GM12878 (cell line): ENCODE measurements at regions of chr9 and their contacts with region 1.

Region 1: GRCh38 chr9:131762356-131762932 is 22.6 kb upstream of the RAPGEF1 start:
- DNase-seq: no peak
- ATAC-seq: peak; percentile 98
- H3K4me3 ChIP-seq: no peak overlapping the region
- H3K27ac ChIP-seq: no peak overlapping the region
- H3K4me1 ChIP-seq: no peaks in the 10 kb centered on the region
- H3K27me3 ChIP-seq: no peaks in the 10 kb centered on the region; a peak in 1 of 4 replicates
- CTCF ChIP-seq: peak; percentile 63 to 88 (median 87)
- EP300 ChIP-seq: no peak
- POLR2A ChIP-seq: no peak
- RAD21 ChIP-seq: peak; percentile 74

Region 2: DNA sequence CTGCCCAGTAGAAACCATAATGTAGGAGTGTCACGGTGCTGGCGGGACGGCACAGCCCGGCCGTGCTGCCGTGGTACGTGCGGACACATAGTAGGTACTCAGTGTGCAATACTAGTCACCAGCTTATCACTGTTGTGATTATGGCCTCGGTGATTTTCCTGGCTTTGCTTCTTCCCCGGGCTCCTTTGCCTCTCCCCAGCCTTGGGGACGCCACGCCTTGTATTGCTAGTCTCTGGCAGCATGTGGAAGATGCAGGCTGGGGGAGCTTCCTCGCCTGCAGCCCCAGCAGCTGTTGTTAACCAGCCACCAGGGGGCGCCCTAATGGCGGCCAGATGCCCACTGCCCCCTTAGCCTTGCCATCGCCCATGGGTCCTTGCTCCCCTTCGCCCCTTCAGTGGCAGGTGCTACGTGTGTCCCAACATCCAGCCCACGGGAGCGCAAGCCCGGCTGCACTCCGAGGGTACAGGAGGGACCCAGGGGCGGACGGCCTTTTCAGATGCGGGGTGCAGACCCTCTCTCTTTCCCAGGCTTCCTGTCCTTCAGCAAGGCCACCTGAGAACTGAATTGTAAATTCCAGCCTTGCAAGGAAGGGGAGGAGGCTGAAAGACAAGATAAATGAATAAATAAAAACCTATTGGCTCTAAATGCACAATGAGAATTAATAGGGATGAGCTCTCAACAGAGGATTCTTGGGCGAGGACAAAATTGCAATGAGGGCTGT is 407.4 kb after region 1 on chr9:
- CTCF ChIA-PET with region 1: interaction called, 4 read pairs
- POLR2A ChIA-PET with region 1: no interaction called
- RAD21 ChIA-PET with region 1: no interaction called
- SMC1A ChIA-PET with region 1: interaction called, 3 read pairs
- in situ Hi-C with region 1: no loop called
- intact Hi-C with region 1: loop called (anchors 2 kb)
- DNase-seq: no peak
- ATAC-seq: peak; percentile 91
- H3K4me3 ChIP-seq: no peak overlapping the region
- H3K27ac ChIP-seq: no peak overlapping the region
- H3K4me1 ChIP-seq: no peaks in the 10 kb centered on the region
- H3K27me3 ChIP-seq: peaks cover 0 to 4% of the 10 kb centered on the region in 2 experiments
- CTCF ChIP-seq: peak; percentile 74 to 92 (median 83)
- EP300 ChIP-seq: no peak
- POLR2A ChIP-seq: no peak
- RAD21 ChIP-seq: peak; percentile 48; the same call in 1 of the 2 replicates

Region 3: DNA sequence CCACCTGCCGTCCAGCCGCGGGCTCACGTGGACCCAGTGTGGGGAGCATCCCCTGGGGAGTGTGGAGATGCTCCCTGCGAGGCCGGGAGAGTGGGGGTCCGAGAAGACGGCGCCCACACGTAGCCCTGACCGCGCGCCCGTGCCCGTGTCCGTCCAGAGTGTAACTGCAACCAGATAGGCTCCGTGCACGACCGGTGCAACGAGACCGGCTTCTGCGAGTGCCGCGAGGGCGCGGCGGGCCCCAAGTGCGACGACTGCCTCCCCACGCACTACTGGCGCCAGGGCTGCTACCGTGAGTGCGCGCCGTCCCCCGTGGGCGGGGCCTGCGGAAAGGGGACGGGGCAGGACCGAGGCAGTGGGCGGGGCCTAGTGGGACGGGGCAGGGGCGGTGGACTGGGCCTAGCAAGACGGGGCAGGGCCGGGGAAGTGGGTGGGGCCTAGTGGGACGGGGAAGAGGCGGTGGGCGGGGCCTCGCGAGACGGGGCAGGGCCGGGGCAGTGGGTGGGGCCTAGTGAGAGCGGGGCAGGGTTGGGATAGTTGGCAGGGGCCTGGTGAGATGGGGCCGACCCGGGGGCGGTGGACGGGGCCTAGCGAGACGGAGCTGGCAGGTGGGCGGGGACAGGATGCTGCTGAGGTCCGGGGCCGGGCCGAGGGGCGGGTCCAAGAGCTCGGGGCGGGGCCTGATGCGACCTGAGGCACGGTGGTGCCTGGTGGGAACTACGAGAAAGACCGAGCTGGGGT is 478.5 kb after region 1 on chr9:
- CTCF ChIA-PET with region 1: interaction called, 35 read pairs
- POLR2A ChIA-PET with region 1: interaction called, 3 read pairs
- RAD21 ChIA-PET with region 1: interaction called, 20 read pairs
- SMC1A ChIA-PET with region 1: interaction called, 10 read pairs
- in situ Hi-C with region 1: no loop called
- intact Hi-C with region 1: loop called (anchors 1 kb)
- DNase-seq: peak; percentile 66
- ATAC-seq: peak; percentile 93
- H3K4me3 ChIP-seq: peak overlapping the region; percentile 69; the same call in 1 of the 2 replicates
- H3K27ac ChIP-seq: no peak overlapping the region
- H3K4me1 ChIP-seq: peaks cover 3% of the 10 kb centered on the region
- H3K27me3 ChIP-seq: peaks cover 0 to 6% of the 10 kb centered on the region in 2 experiments; a peak in 1 of 4 replicates
- CTCF ChIP-seq: no peak
- EP300 ChIP-seq: no peak
- POLR2A ChIP-seq: peak; percentile 55
- RAD21 ChIP-seq: no peak

Region 4: DNA sequence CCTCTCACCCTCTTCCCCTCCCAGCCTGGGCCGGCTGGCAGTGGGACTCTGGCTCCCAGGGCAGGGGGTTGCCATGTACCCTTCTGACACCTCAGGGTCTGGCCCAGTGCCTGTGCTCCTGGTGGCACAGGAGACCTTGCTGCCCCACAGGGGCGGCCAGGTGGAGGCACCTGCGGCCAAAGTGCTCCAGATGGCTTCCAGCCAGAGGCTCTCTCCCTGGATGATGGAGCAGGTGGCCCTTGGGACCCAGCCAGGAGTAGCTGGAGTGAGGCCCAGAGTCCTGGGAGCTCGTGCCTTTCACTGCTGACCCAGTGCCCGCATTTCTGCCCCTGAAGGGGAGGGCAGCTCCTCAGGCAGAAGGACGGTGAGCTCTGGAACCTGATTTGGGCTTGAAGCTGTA is 486.7 kb after region 1 on chr9:
- CTCF ChIA-PET with region 1: interaction called, 11 read pairs
- POLR2A ChIA-PET with region 1: no interaction called
- RAD21 ChIA-PET with region 1: interaction called, 4 read pairs
- SMC1A ChIA-PET with region 1: interaction called, 4 read pairs
- in situ Hi-C with region 1: loop called (anchors 5 kb)
- intact Hi-C with region 1: loop called (anchors 1 kb)
- DNase-seq: no peak
- ATAC-seq: no peak
- H3K4me3 ChIP-seq: no peak overlapping the region
- H3K27ac ChIP-seq: no peak overlapping the region
- H3K4me1 ChIP-seq: no peaks in the 10 kb centered on the region
- H3K27me3 ChIP-seq: no peaks in the 10 kb centered on the region; a peak in 1 of 4 replicates
- CTCF ChIP-seq: no peak
- EP300 ChIP-seq: no peak
- POLR2A ChIP-seq: no peak
- RAD21 ChIP-seq: no peak

Region 5: GRCh38 chr9:132268725-132269352 is 506.4 kb after region 1 on chr9:
- CTCF ChIA-PET with region 1: interaction called, 15 read pairs
- POLR2A ChIA-PET with region 1: no interaction called
- RAD21 ChIA-PET with region 1: no interaction called
- SMC1A ChIA-PET with region 1: interaction called, 3 read pairs
- in situ Hi-C with region 1: no loop called
- intact Hi-C with region 1: no loop called
- DNase-seq: no peak
- ATAC-seq: peak; percentile 90
- H3K4me3 ChIP-seq: no peak overlapping the region
- H3K27ac ChIP-seq: no peak overlapping the region
- H3K4me1 ChIP-seq: no peaks in the 10 kb centered on the region
- H3K27me3 ChIP-seq: no peaks in the 10 kb centered on the region
- CTCF ChIP-seq: peak; percentile 74 to 89 (median 81)
- EP300 ChIP-seq: no peak
- POLR2A ChIP-seq: no peak
- RAD21 ChIP-seq: peak; percentile 43